ENCODE measurements at regions of chr20 and their contacts with region 1.

Region 1: GRCh38 chr20:50790651-50791277 is 4.1 kb upstream of the BCAS4 start:
- DNase-seq: peak; percentile 95
- ATAC-seq: peak; percentile 95

Region 2: DNA sequence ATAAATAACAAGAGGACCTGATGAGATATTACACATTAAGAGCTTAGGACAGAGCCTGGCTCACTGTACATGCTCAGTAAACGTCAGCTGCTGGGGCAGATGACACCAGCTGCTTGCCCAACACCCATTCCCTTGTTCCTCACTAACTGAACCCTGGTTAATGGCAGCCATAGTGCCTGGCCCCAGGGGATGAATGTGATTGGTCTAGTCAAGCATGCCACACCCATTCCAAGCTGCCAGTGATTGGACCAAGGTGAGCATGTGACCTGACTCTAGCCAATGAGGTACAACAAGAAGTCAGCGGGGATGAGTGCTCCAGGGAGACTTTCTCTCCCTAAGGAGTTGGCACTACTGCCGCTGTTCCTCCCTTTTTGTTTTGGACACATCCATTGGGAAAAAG is 365.7 kb before region 1 on chr20:
- intact Hi-C with region 1: no loop called
- DNase-seq: no peak
- ATAC-seq: no peak

Region 3: DNA sequence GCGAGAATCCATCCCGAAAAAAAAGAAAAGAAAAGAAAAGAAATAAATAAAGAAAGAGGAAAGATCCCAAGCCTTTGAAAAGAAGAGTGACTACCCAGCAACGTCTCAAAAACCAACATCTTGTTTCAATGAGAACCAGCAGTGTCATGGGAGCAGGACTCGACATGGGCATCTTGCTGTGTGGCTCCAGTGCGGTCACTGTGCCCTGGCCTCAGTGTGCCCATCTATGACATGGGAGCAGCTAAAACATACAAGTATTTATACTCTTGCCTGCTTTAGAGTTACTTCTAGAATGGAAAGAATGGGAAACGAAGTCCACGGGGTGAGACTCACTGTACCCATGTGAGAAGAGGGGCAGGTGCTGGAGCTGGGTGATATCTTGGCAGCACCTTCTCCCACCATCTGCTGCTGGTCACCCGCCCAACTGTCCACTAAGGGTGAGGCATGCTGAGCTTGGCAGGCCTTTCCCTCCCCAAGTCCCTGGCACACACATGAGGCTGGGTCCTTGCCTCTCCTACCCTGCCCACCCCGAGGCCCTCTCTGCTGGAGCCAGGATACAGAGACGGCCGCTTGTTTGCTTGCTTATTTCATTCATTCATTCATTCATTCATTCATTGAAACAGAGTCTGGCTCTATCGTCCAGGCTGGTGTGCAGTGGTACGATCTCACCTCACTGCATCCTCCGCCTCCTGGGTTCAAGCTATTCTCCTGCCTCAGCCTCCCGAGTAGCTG is 177.2 kb before region 1 on chr20:
- intact Hi-C with region 1: no loop called
- DNase-seq: no peak
- ATAC-seq: no peak

Region 4: GRCh38 chr20:50929299-50930138 is 138.8 kb after region 1 on chr20:
- intact Hi-C with region 1: loop called (anchors 5 kb)
- DNase-seq: peak; percentile 87
- ATAC-seq: peak; percentile 73

Measured in sciatic nerve (tissue), 2 donors.